Activated B cell treated with CpG ODN at 0.5 μM for 24 hours (primary cell): ENCODE measurements at regions of chr12 and their contacts with region 1.

Region 1: GRCh38 chr12:116673681-116674111 is 64.2 kb downstream of the SPRING1 start:
- DNase-seq: no peak
- ATAC-seq: no peak
- H3K4me3 Mint-ChIP-seq: peak overlapping the region; percentile 13
- H3K27ac Mint-ChIP-seq: no peak overlapping the region
- H3K4me1 Mint-ChIP-seq: peaks cover 70% of the 10 kb centered on the region
- H3K27me3 Mint-ChIP-seq: no peaks in the 10 kb centered on the region
- CTCF ChIP-seq: no peak

Region 2: GRCh38 chr12:116539905-116540482 is 133.7 kb before region 1 on chr12:
- CTCF ChIA-PET with region 1: no interaction called
- POLR2A ChIA-PET with region 1: no interaction called
- intact Hi-C with region 1: loop called (anchors 5 kb)
- DNase-seq: no peak
- ATAC-seq: no peak
- H3K4me3 Mint-ChIP-seq: no peak overlapping the region
- H3K27ac Mint-ChIP-seq: peak overlapping the region; percentile 19
- H3K4me1 Mint-ChIP-seq: peaks cover 52% of the 10 kb centered on the region
- H3K27me3 Mint-ChIP-seq: no peaks in the 10 kb centered on the region
- CTCF ChIP-seq: no peak

Region 3: DNA sequence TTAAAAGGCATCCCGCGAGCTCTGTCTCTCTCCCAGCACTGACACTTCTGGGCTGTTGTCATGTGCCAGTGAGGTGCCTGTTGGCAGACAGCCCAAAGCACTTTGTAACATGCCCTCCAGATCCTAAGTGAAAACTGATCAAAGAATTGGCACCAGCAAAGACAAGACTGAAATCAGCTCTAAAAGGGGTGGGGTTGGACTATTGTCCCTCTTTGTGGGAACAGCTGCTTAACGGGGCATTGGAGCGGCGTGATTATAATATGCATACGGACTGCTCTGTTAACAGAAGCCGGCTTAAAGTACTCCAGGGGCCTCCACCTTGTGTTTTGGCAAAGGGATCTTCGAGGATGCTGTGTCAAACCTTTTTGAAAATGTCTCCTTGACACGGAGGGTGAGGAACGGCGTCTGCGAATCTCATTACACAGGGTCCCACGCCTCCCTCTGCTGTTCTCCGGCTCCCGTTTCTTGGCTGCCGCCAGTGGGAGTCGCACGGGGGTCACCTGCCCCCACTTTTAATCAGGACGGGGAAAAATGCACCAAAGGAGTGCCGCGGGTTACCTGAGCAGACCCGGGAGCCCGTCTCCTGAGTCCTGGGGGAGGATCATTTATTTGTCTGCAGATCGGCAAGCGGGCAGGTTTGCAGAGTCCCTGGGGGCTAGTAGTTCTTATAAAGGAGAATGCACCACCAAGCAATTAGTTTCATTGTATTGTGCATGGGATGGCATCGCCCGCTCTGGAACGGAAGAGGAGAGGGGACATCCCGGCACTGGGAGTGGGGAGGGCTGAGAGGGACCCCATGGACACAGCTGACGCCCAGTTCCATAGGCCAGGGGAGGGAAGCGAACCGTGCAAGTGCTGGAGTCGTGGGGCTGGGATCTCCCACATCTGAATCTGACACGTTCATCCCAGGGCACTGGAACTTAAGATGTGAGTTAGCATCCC is 19.9 kb after region 1 on chr12:
- CTCF ChIA-PET with region 1: interaction called, 3 read pairs
- POLR2A ChIA-PET with region 1: interaction called, 5 read pairs
- intact Hi-C with region 1: loop called (anchors 2 kb)
- DNase-seq: no peak
- ATAC-seq: peak; percentile 32
- H3K4me3 Mint-ChIP-seq: peak overlapping the region; percentile 76
- H3K27ac Mint-ChIP-seq: no peak overlapping the region
- H3K4me1 Mint-ChIP-seq: peaks cover 52% of the 10 kb centered on the region
- H3K27me3 Mint-ChIP-seq: peaks cover 41% of the 10 kb centered on the region
- CTCF ChIP-seq: no peak